ENCODE measurements at regions of chr14 and their contacts with region 1.

Region 1: GRCh38 chr14:100239840-100240724 is 1.1 kb downstream of the YY1 start:
- DNase-seq: peak; percentile 96
- H3K4me3 ChIP-seq: peak overlapping the region; percentile 75 to 100 (median 98)
- H3K27ac ChIP-seq: peak overlapping the region; percentile 98 to 100 (median 98)
- H3K4me1 ChIP-seq: peaks cover 0 to 57% (median 55%) of the 10 kb centered on the region in 4 donors
- H3K27me3 ChIP-seq: no peaks in the 10 kb centered on the region
- CTCF ChIP-seq: peak; percentile 39 to 75 (median 44)
- EP300 ChIP-seq: peak in 2 of 4 donors; percentile 30 to 80
- POLR2A ChIP-seq: peak; percentile 11 to 26

Region 2: DNA sequence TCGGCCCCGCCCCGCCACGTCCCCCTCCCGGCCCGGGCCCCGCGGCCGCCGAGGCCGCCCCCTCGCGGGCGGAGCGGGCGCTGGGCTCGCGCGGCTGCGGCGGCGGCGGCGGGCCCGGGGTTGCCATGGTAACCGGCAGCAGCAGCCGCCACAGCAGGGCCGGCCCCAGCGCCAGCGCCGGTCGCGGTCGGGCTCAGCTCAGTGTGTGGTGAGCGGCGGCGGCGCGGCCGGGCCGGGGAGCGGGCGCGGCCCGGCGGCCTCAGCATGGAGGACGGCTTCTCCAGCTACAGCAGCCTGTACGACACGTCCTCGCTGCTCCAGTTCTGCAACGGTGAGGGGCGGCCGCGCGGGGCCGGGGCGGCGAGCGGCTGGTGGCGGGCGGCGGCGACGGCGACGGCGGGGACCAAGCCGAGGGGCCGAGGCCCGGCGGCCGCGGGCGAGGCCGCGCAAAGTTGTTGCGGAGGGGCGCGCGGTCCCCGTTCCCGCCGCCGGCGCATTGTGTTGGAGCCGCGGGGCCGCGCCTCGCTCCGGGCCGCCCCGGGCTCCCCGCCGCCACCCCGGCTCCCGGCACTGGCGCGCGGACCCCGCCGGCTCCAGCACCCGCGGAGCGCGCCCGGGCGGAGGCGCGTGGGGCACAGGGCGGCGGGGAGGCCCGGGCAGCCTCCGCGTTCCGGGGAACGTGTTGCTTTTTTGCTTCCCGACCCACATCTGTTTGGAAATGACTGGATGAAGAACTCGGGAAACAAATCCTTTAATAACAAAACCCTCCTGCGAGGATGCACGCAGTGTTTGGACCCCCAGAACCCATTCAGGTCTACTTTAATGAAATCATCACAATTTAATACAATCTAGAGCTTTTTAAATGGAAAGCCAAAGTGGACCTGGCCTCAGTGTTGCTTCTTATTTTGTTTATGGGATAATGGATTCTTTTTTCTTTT is 446.6 kb before region 1 on chr14 and contains the start of gene EML1:
- intact Hi-C with region 1: no loop called
- DNase-seq: peak; percentile 93
- H3K4me3 ChIP-seq: peak within 1 kb of the TSS; percentile 44 to 63 (median 60)
- H3K27ac ChIP-seq: peak within 1 kb of the TSS; percentile 92 to 97 (median 96)
- H3K4me1 ChIP-seq: peaks cover 0 to 74% (median 57%) of the 10 kb centered on the region in 4 donors
- H3K27me3 ChIP-seq: no peaks in the 10 kb centered on the region
- CTCF ChIP-seq: no peak
- EP300 ChIP-seq: no peak
- POLR2A ChIP-seq: no peak
- total RNA-seq, gene EML1: 91.5 to 148 (median 141) TPM

Region 3: GRCh38 chr14:100213956-100214774 is 25.9 kb before region 1 on chr14:
- intact Hi-C with region 1: loop called (anchors 1 kb)
- DNase-seq: peak; percentile 94
- H3K4me3 ChIP-seq: peak overlapping the region; percentile 74 to 97 (median 86)
- H3K27ac ChIP-seq: peak overlapping the region; percentile 94 to 99 (median 95)
- H3K4me1 ChIP-seq: peaks cover 0 to 11% (median 5%) of the 10 kb centered on the region in 4 donors
- H3K27me3 ChIP-seq: no peaks in the 10 kb centered on the region
- CTCF ChIP-seq: no peak
- EP300 ChIP-seq: no peak
- POLR2A ChIP-seq: peak; percentile 58 to 64

Region 4: DNA sequence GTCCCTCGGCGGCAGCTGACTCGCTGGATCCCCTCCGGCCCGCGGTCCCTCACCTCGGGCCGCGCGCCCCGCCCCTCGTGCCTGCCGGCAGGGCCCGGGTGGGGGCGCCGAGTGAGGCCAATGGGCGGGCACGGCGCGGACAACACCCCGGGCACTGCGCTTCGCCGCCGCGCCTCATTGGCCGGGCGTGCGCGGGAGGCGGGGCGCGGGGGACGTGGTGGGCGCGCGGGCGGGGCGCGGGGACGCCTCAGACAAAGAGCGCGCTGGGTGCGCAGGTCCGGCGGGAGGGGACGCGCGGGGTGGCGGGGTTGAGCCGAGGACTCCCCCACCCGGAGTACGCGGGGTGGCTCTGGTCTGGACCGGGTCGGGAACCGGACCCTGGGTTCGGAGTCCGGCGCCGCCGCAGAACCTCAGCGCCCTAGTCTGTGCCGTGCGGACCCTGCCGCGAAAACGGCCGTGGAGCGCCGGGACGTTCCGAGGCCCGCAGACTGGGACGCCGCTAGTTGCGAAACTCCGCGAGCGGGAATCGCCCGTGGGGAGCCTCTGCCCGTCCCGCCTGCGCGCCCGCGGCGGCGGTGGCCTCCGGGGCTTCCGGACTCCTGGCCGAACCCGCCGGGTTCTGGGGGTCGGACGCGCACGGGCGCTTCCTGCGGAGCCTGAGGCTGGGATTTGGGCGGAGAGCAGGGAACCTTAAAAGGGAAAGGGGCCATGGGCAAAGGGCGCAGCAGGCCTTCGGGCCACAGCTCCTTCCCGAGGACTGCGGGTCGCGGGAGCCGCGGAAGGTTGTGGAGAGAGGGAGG is 66.5 kb after region 1 on chr14 and contains the start of gene SLC25A29:
- intact Hi-C with region 1: loop called (anchors 2 kb)
- DNase-seq: peak; percentile 94
- H3K4me3 ChIP-seq: peak within 1 kb of the TSS; percentile 65 to 98 (median 75)
- H3K27ac ChIP-seq: peak within 1 kb of the TSS; percentile 85 to 92 (median 90)
- H3K4me1 ChIP-seq: peaks cover 0 to 36% (median 29%) of the 10 kb centered on the region in 4 donors
- H3K27me3 ChIP-seq: no peaks in the 10 kb centered on the region
- CTCF ChIP-seq: no peak
- EP300 ChIP-seq: peak in 1 of 4 donors; percentile 27
- POLR2A ChIP-seq: peak; percentile 42 to 62
- total RNA-seq, gene SLC25A29: 18.5 to 40.4 (median 33.4) TPM